Mammary epithelial cell (primary cell): ENCODE measurements at regions of chr3 and their contacts with region 1.

Region 1: DNA sequence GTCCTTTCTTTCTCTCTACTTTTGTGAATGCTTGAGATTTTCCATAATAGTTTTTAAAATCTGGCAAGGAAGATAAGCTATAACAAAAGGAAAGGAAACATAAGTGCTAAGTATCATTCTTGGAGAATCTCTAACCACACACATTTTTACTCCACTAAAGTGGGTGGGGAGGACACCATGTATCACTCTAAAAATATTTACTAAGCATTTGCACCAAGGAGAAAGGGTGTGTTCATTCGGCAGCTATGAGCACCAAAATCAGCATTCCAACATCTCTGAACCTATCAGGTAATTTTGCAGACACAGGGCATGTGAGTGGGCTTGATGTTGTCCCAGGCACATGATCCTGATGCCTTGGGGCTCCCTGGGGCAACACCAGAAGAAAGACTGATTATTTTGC is 5.5 kb downstream of the B4GALT4 start:
- DNase-seq: peak; percentile 64
- H3K4me3 ChIP-seq: no peak overlapping the region
- H3K27ac ChIP-seq: peak overlapping the region; percentile 82
- H3K4me1 ChIP-seq: peaks cover 17% of the 10 kb centered on the region
- H3K27me3 ChIP-seq: no peaks in the 10 kb centered on the region
- CTCF ChIP-seq: no peak

Region 2: GRCh38 chr3:119184796-119185570 is 50.2 kb before region 1 on chr3:
- CTCF ChIA-PET with region 1: no interaction called
- dilution Hi-C with region 1: no loop called
- in situ Hi-C with region 1: no loop called
- intact Hi-C with region 1: loop called (anchors 2 kb)
- DNase-seq: peak; percentile 88
- H3K4me3 ChIP-seq: no peak overlapping the region
- H3K27ac ChIP-seq: peak overlapping the region; percentile 74
- H3K4me1 ChIP-seq: peaks cover 40% of the 10 kb centered on the region
- H3K27me3 ChIP-seq: no peaks in the 10 kb centered on the region
- CTCF ChIP-seq: no peak